Caco-2 (cell line): ENCODE measurements at regions of chr1 and their contacts with region 1.

Region 1: DNA sequence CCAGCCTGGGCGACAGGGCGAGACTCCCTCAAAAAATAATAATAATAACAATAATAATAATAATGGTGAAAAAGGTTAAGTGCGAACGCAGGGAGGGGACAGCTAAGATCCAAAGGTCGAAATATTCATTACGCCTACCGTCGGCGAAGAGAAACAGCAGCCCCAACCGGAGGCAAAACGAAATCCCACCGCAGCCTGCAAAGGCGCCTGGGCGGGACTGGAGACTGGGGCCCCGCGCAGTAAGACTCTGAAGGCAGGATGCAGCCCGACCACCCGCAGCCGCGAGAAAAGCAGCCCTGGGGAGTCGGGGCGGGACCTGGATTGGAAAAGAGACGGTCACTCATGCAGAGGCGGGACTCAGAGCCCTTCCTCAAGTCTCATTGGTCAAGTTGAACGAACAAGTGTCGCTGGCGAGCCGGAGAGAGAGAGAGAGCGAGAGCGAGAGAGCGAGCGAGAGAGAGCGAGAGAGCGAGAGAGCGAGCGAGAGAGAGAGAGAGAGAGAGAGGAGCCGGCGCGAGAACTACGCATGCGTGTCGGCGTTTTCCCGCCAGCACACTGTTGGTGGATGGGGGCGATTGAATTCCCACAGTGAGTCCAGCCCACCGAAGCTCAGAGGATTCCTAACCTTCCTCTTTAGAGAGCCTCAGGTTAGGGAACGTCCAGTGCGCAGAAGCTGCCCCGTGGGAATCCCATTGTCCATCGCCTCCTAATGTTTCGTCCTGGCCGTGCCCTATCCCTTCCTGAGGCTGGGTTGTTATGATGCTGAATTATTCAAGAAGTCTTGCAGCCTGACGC is 10.7 kb downstream of the ENTREP3 start:
- DNase-seq: peak; percentile 98 to 99
- H3K4me3 ChIP-seq: peak overlapping the region; percentile 70
- H3K4me3 Mint-ChIP-seq: peak overlapping the region; percentile 70
- H3K27ac Mint-ChIP-seq: peak overlapping the region; percentile 71
- H3K4me1 ChIP-seq: peaks cover 6% of the 10 kb centered on the region; the same call in 1 of the 2 replicates
- H3K4me1 Mint-ChIP-seq: peaks cover 24% of the 10 kb centered on the region
- H3K27me3 ChIP-seq: no peaks in the 10 kb centered on the region
- H3K27me3 Mint-ChIP-seq: peaks cover 3% of the 10 kb centered on the region
- CTCF ChIP-seq: no peak

Region 2: DNA sequence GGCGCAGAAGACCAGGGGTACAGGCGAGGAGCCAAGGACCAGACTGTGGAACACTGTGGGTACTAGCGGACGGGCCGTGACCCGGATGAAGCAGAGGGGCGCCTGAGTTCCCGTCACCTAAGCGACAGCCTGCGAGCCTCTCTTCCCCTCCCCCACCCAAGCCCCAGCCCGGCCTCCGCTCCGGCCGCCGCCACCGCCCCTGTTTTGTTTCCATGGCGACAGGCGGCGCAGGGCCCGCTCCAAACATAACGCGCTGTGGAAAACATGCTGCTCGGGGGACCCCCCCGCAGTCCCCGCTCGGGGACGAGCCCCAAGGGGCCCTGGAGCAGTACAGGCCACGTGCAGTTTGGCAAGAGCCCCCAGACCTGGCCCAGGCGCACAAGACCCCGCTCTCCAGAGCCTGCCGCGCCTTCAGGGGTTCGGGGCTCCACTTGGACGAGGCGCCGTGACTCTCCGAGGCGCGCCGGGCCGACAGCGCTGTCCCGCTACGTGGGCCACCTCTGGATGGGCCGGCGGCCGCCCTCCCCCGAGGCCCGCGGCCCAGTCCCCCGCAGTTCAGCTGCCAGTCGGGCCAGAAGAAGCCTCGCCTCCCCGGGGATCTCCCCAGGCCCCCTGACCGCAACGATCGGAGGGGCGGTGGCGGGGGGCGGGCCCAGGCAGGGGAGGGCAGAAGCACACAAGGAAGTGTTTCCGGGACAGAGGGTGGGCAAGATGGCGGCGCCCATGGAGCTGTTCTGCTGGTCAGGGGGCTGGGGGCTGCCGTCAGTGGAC is 35.8 kb before region 1 on chr1 and contains the start of gene MTX1:
- CTCF ChIA-PET with region 1: interaction called, 10 read pairs
- POLR2A ChIA-PET with region 1: interaction called, 4 read pairs
- intact Hi-C with region 1: loop called (anchors 1 kb)
- DNase-seq: peak; percentile 86
- H3K4me3 ChIP-seq: peak within 1 kb of the TSS; percentile 91
- H3K4me3 Mint-ChIP-seq: peak within 1 kb of the TSS; percentile 80
- H3K27ac Mint-ChIP-seq: peak within 1 kb of the TSS; percentile 93
- H3K4me1 ChIP-seq: peaks cover 15% of the 10 kb centered on the region
- H3K4me1 Mint-ChIP-seq: peaks cover 16% of the 10 kb centered on the region
- H3K27me3 ChIP-seq: no peaks in the 10 kb centered on the region
- H3K27me3 Mint-ChIP-seq: no peaks in the 10 kb centered on the region
- CTCF ChIP-seq: no peak
- total RNA-seq, gene MTX1: 64.9 and 65.3 TPM in 2 replicates

Region 3: DNA sequence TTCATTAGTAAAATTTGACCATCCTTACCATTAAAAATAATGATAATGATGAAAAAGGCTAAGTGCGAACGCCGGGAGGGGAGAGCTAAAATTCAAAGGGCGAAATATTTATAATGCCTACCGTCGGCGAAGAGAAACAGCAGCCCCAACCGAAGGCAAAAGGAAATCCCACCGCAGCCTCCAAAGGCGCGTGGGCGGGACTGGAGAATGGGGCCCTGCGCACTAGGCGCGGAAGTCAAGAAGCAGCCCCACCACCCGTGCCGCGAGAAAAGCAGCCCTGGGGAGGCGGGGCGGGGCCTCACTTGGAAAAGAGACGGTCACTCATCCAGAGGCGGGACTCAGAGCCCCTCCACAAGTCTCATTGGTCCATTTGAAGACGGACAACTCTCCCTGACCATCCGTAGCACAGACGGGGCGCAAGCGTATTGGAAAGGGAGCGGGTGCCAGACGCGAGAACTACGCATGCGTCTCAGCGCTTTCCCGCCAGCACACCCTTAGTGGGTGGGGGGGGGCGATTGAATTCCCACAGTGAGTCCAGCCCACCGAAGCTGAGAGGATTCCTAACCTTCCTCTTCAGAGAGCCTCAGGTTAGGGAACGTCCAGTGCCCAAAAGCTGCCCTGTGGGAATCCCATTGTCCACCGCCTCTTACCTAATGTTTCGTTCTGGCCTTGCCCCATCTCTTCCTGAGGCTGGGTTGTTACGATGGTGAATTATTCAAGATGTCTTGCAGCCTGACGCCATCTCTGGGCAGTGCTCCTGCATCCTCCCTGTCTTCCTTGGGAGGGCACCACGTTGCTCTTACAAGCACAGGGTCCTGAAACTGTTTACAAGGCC is 17.1 kb before region 1 on chr1:
- CTCF ChIA-PET with region 1: no interaction called
- POLR2A ChIA-PET with region 1: interaction called, 4 read pairs
- intact Hi-C with region 1: loop called (anchors 1 kb)
- DNase-seq: peak; percentile 99
- H3K4me3 ChIP-seq: peak overlapping the region; percentile 62
- H3K4me3 Mint-ChIP-seq: peak overlapping the region; percentile 81
- H3K27ac Mint-ChIP-seq: peak overlapping the region; percentile 80
- H3K4me1 ChIP-seq: peaks cover 22% of the 10 kb centered on the region
- H3K4me1 Mint-ChIP-seq: peaks cover 25% of the 10 kb centered on the region
- H3K27me3 ChIP-seq: no peaks in the 10 kb centered on the region
- H3K27me3 Mint-ChIP-seq: no peaks in the 10 kb centered on the region
- CTCF ChIP-seq: no peak